IMR-90 (cell line): ENCODE measurements at regions of chr3 and their contacts with region 1.

Region 1: DNA sequence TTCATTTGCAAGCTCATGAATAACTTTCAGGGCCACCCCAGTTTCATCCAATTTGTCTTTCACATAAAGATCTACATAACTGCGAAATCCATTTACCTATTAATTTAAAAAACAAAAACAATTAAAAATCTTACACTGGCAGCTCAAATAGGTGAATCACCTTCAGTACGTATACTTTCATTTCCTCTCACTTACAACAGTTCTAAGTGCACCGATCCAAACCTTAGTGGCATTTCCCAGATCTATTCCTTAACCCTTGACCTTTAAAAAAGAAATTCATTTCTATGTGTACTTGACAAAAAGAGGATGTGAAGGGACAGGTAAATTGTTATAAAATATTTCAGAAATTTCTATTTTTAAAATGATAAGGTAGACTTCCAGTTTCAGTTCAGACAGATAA is 30.8 kb downstream of the TOP2B start:
- DNase-seq: no peak
- ATAC-seq: no peak
- H3K4me3 ChIP-seq: no peak overlapping the region
- H3K27ac ChIP-seq: no peak overlapping the region
- H3K4me1 ChIP-seq: no peaks in the 10 kb centered on the region
- H3K27me3 ChIP-seq: no peaks in the 10 kb centered on the region
- CTCF ChIP-seq: no peak
- POLR2A ChIP-seq: no peak
- RAD21 ChIP-seq: no peak

Region 2: GRCh38 chr3:25372167-25372566 is 261.8 kb before region 1 on chr3:
- CTCF ChIA-PET with region 1: no interaction called
- POLR2A ChIA-PET with region 1: no interaction called
- dilution Hi-C with region 1: no loop called
- in situ Hi-C with region 1: no loop called
- intact Hi-C with region 1: no loop called
- DNase-seq: no peak
- ATAC-seq: no peak
- H3K4me3 ChIP-seq: no peak overlapping the region
- H3K27ac ChIP-seq: no peak overlapping the region
- H3K4me1 ChIP-seq: no peaks in the 10 kb centered on the region
- H3K27me3 ChIP-seq: no peaks in the 10 kb centered on the region
- CTCF ChIP-seq: no peak
- POLR2A ChIP-seq: no peak
- RAD21 ChIP-seq: no peak

Region 3: GRCh38 chr3:25603703-25604102 is 30.2 kb before region 1 on chr3:
- CTCF ChIA-PET with region 1: no interaction called
- POLR2A ChIA-PET with region 1: no interaction called
- dilution Hi-C with region 1: no loop called
- in situ Hi-C with region 1: no loop called
- intact Hi-C with region 1: no loop called
- DNase-seq: no peak
- ATAC-seq: peak; percentile 15
- H3K4me3 ChIP-seq: no peak overlapping the region
- H3K27ac ChIP-seq: no peak overlapping the region
- H3K4me1 ChIP-seq: peaks cover 2% of the 10 kb centered on the region; the same call in 1 of the 2 replicates
- H3K27me3 ChIP-seq: no peaks in the 10 kb centered on the region
- CTCF ChIP-seq: no peak
- POLR2A ChIP-seq: no peak
- RAD21 ChIP-seq: no peak

Region 4: DNA sequence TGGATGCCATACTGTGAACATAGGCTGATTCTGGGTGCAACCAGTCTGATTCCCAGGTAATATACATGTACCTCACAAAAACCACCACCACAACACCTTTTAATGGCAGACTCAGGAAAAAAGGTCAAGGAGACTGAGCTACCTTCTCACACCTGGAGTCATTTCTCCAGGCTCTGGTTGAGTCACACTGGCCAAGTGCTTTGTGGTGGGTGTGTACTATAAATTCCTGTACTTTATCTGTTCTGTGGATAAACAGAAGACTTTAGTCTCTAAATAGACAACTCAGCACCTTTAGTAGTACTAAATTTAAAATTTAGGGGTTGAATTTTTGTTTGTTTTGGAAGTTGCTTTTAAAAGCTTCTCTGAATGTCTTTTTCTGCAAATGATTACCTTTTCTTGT is 15.9 kb before region 1 on chr3:
- CTCF ChIA-PET with region 1: no interaction called
- POLR2A ChIA-PET with region 1: no interaction called
- dilution Hi-C with region 1: no loop called
- in situ Hi-C with region 1: no loop called
- intact Hi-C with region 1: loop called (anchors 2 kb)
- DNase-seq: no peak
- ATAC-seq: no peak
- H3K4me3 ChIP-seq: no peak overlapping the region
- H3K27ac ChIP-seq: no peak overlapping the region
- H3K4me1 ChIP-seq: no peaks in the 10 kb centered on the region
- H3K27me3 ChIP-seq: no peaks in the 10 kb centered on the region
- CTCF ChIP-seq: no peak
- POLR2A ChIP-seq: no peak
- RAD21 ChIP-seq: no peak

Region 5: GRCh38 chr3:25768851-25769250 is 134.9 kb after region 1 on chr3:
- CTCF ChIA-PET with region 1: no interaction called
- POLR2A ChIA-PET with region 1: no interaction called
- dilution Hi-C with region 1: no loop called
- in situ Hi-C with region 1: no loop called
- intact Hi-C with region 1: loop called (anchors 5 kb)
- DNase-seq: no peak
- ATAC-seq: no peak
- H3K4me3 ChIP-seq: no peak overlapping the region
- H3K27ac ChIP-seq: no peak overlapping the region
- H3K4me1 ChIP-seq: no peaks in the 10 kb centered on the region
- H3K27me3 ChIP-seq: no peaks in the 10 kb centered on the region
- CTCF ChIP-seq: no peak
- POLR2A ChIP-seq: no peak
- RAD21 ChIP-seq: no peak

Region 6: DNA sequence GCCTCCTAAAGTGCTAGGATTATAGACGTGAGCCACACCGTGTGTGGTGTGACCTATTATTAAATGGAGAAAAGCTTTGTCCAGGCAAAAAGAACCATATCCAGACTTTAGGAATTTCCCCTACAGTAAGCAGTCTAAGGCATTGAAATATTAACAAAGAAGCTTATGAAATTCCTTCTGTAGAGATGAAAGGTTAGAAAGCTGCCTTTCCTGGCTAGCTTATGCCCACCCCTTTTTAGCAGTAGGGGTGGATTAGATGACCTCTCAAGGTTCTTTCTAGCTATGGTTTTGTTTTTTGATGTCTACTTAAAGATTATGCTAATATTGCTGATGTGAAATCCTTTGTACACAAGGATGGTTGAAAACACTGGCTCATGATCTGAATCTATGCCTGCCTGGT is 169.9 kb after region 1 on chr3:
- CTCF ChIA-PET with region 1: no interaction called
- POLR2A ChIA-PET with region 1: no interaction called
- dilution Hi-C with region 1: no loop called
- in situ Hi-C with region 1: no loop called
- intact Hi-C with region 1: no loop called
- DNase-seq: no peak
- ATAC-seq: no peak
- H3K4me3 ChIP-seq: no peak overlapping the region
- H3K27ac ChIP-seq: no peak overlapping the region
- H3K4me1 ChIP-seq: no peaks in the 10 kb centered on the region
- H3K27me3 ChIP-seq: no peaks in the 10 kb centered on the region
- CTCF ChIP-seq: no peak
- POLR2A ChIP-seq: no peak
- RAD21 ChIP-seq: no peak